PC-3 (cell line): ENCODE measurements at regions of chr1 and their contacts with region 1.

Region 1: GRCh38 chr1:83882906-83883305 is 116.0 kb downstream of the TTLL7 start:
- DNase-seq: peak; percentile 90
- ATAC-seq: peak; percentile 99
- H3K4me3 ChIP-seq: no peak overlapping the region
- H3K27ac ChIP-seq: no peak overlapping the region
- H3K4me1 ChIP-seq: peaks cover 8% of the 10 kb centered on the region
- H3K27me3 ChIP-seq: no peaks in the 10 kb centered on the region
- CTCF ChIP-seq: peak; percentile 78

Region 2: DNA sequence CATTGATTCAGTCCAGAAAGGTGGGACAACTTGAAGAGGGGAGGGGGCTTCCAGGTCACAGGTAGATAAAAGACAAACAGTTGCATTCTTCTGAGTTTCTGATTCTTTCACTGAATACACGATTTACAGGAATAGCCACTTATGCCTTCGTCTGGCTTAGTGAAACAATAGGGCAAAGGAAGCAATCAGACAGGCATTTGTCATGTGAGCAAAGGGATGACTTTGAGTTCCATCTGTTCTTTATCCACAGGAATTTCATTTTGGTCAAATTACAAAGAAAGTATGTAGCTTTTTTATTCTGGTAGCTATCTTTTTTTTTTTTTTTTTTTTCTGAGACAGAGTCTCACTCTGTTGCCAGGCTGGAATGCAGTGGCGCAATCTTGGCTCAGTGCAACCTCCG is 86.5 kb before region 1 on chr1:
- CTCF ChIA-PET with region 1: interaction called, 10 read pairs
- POLR2A ChIA-PET with region 1: no interaction called
- intact Hi-C with region 1: no loop called
- DNase-seq: no peak
- ATAC-seq: no peak
- H3K4me3 ChIP-seq: no peak overlapping the region
- H3K27ac ChIP-seq: no peak overlapping the region
- H3K4me1 ChIP-seq: 0 out of 2 replicates have a peak, but pooled peaks cover 3% of the 10 kb centered on the region
- H3K27me3 ChIP-seq: no peaks in the 10 kb centered on the region
- CTCF ChIP-seq: no peak

Region 3: DNA sequence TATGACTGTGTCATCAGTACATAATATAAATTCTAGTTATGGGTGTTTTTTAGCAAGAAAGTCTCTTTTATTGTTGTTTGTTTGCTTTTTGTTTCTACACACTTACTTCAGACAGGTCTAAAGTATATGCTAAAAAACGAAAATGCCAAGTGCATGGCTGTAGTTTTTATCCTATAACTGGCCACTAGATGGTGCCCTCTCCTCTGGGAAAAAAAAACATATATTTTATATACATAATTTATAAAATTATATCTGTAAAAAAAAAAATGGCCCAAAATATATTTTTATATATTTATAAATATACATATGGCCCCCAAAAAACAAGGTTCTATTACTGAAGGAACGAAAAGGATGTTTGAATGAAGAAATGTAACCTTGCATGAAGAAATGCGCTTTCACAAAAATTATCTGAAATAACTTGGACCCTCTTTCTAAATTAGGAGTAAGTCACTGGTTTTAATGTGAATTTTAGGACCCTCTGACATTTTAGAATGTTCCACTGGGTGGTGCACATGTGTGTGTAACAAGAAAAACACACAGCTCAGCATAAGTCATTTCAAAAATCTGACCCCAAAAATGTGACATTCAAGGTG is 22.5 kb after region 1 on chr1:
- CTCF ChIA-PET with region 1: no interaction called
- POLR2A ChIA-PET with region 1: no interaction called
- intact Hi-C with region 1: loop called (anchors 2 kb)
- DNase-seq: peak; percentile 51
- ATAC-seq: no peak
- H3K4me3 ChIP-seq: no peak overlapping the region
- H3K27ac ChIP-seq: no peak overlapping the region
- H3K4me1 ChIP-seq: peaks cover 21% of the 10 kb centered on the region
- H3K27me3 ChIP-seq: no peaks in the 10 kb centered on the region
- CTCF ChIP-seq: peak; percentile 45